Activated CD4-positive, alpha-beta T cell treated with anti-CD3 and anti-CD28 coated beads for 36 hours (primary cell): ENCODE measurements at regions of chr2 and their contacts with region 1.

Region 1: GRCh38 chr2:25161055-25161781 is 7.2 kb downstream of the POMC start:
- DNase-seq: peak; percentile 91
- ATAC-seq: peak; percentile 76
- H3K4me3 Mint-ChIP-seq: peak overlapping the region; percentile 76
- H3K27ac Mint-ChIP-seq: peak overlapping the region; percentile 84
- H3K4me1 Mint-ChIP-seq: peaks cover 23% of the 10 kb centered on the region
- H3K27me3 Mint-ChIP-seq: no peaks in the 10 kb centered on the region

Region 2: GRCh38 chr2:24429197-24430074 is 731.8 kb before region 1 on chr2:
- CTCF ChIA-PET with region 1: no interaction called
- POLR2A ChIA-PET with region 1: no interaction called
- intact Hi-C with region 1: no loop called
- DNase-seq: no peak
- ATAC-seq: no peak
- H3K4me3 Mint-ChIP-seq: no peak overlapping the region
- H3K27ac Mint-ChIP-seq: no peak overlapping the region
- H3K4me1 Mint-ChIP-seq: no peaks in the 10 kb centered on the region
- H3K27me3 Mint-ChIP-seq: no peaks in the 10 kb centered on the region

Region 3: GRCh38 chr2:25201265-25201664 is 40.0 kb after region 1 on chr2:
- CTCF ChIA-PET with region 1: interaction called, 14 read pairs
- POLR2A ChIA-PET with region 1: no interaction called
- intact Hi-C with region 1: loop called (anchors 1 to 2 kb)
- DNase-seq: no peak
- ATAC-seq: no peak
- H3K4me3 Mint-ChIP-seq: no peak overlapping the region
- H3K27ac Mint-ChIP-seq: no peak overlapping the region
- H3K4me1 Mint-ChIP-seq: peaks cover 9% of the 10 kb centered on the region
- H3K27me3 Mint-ChIP-seq: no peaks in the 10 kb centered on the region